Common myeloid progenitor, CD34-positive (primary cell): ENCODE measurements at regions of chr6 and their contacts with region 1.

Region 1: DNA sequence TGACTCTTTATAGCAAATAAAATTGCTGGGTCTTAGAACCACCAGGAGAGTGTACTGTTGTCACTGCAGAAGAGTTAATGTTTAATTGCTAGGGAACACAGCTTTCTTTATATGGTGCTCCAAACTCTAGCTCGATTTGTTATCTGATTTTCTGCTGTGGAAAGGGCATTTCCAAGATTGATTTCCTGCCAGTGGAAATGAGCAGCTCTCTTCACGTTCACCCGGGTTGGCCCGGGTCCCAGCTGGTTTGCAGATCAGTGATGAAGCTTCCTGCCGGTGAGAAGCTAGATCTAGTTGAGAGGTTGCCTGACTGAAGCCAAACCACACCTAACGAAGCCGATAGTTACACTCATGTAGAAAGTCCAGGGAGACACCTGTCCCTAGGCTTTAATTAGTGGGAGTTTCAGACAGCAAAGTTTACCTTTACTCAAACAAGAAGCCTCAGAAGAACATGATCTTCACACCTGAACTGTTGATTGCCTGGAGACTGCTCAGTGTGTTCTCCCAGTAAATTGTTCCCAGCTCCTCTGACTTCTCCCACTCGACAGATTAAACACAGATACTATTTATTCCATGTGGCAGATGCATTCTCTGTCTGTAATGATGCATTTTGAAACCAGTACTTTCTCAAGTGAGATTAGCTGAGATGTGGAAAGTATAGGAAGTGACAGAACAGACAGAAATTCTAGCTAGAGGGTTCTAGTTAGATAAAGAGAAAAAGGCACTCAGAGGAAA is 27.8 kb downstream of the PAQR8 start:
- DNase-seq: peak; percentile 52 to 79 (median 70)
- H3K4me3 ChIP-seq: peak overlapping the region in 5 of 7 experiments; percentile 30 to 59 (median 46)
- H3K27ac ChIP-seq: peak overlapping the region; percentile 70 to 81
- H3K4me1 ChIP-seq: peaks cover 13 to 35% (median 27%) of the 10 kb centered on the region in 4 experiments
- H3K27me3 ChIP-seq: no peaks in the 10 kb centered on the region

Region 2: GRCh38 chr6:52407467-52407866 is 17.7 kb after region 1 on chr6:
- CTCF ChIA-PET with region 1: interaction called, 131 read pairs
- POLR2A ChIA-PET with region 1: no interaction called
- DNase-seq: peak; percentile 72 to 89 (median 84)
- H3K4me3 ChIP-seq: no peak overlapping the region
- H3K27ac ChIP-seq: no peak overlapping the region
- H3K4me1 ChIP-seq: no peaks in the 10 kb centered on the region
- H3K27me3 ChIP-seq: no peaks in the 10 kb centered on the region